ENCODE measurements at regions of chr11 and their contacts with region 1.

Region 1: GRCh38 chr11:46845740-46846509 is at the start of gene CKAP5:
- DNase-seq: peak; percentile 53 to 90
- H3K4me3 ChIP-seq: peak within 1 kb of the TSS; percentile 90 to 98 (median 92)
- H3K27ac ChIP-seq: peak within 1 kb of the TSS; percentile 75
- H3K4me1 ChIP-seq: peaks cover 0 to 2% (median 0%) of the 10 kb centered on the region in 4 experiments; a peak in 2 of 7 replicates
- H3K27me3 ChIP-seq: no peaks in the 10 kb centered on the region; a peak in 1 of 7 replicates
- CTCF ChIP-seq: no peak
- EP300 ChIP-seq: no peak
- POLR2A ChIP-seq: peak; percentile 19 to 73
- RAD21 ChIP-seq: no peak
- total RNA-seq, gene CKAP5: 185 and 192 TPM in 2 replicates

Region 2: DNA sequence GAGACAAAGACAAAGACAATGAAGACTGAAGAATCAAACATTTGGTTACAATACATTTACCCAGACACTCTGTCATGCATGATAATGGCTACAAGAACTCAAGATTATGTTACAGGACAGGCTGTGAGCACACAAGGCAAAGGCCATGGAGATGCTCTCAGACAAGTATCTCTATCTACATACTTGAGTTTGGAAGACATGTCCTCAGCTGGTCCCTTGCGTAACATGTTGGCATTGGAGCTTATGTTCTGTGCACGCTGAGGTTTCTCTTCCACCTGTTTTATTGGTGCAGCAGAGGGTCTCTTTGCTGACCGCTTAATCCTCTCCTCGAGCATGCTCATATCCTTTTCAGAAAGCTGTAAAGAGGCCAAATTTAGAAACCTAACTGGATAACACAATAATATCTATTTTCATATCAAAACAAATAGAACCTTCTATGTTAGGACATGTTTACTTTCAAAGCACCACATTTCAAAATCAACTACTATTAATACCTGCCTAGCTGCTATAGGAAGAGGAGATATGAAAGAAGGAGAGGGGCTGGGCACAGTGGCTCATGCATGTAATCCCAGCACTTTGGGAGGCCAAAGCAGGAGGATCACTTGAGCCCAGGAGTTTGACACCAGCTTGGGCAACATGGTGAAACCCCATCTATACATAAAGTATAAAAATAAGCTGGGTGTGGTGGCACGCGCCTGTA is 85.3 kb before region 1 on chr11:
- CTCF ChIA-PET with region 1: no interaction called
- POLR2A ChIA-PET with region 1: no interaction called
- DNase-seq: no peak
- H3K4me3 ChIP-seq: no peak overlapping the region
- H3K27ac ChIP-seq: no peak overlapping the region
- H3K4me1 ChIP-seq: no peaks in the 10 kb centered on the region
- H3K27me3 ChIP-seq: no peaks in the 10 kb centered on the region; a peak in 1 of 7 replicates
- CTCF ChIP-seq: no peak
- EP300 ChIP-seq: no peak
- POLR2A ChIP-seq: no peak
- RAD21 ChIP-seq: no peak

Region 3: DNA sequence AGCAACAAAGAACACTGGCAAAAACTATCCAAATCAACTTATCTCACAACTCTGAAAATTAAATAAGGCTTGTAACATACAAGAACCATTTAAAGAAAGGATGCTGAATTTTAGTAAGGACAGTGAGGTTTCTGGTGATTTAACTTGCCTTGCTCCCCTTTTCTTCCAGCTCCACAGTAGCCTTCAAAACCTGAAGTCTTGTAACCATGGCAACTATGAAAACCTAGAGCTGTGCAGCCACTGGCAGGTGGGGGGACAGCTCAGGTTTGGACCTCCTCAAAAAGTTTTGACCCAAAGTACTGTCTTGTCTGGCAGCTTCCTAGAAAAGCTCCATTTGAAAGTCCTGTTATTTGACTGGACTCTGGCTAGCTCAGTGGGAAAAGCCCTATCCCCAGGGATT is 59.8 kb before region 1 on chr11:
- CTCF ChIA-PET with region 1: no interaction called
- POLR2A ChIA-PET with region 1: no interaction called
- DNase-seq: no peak
- H3K4me3 ChIP-seq: no peak overlapping the region
- H3K27ac ChIP-seq: no peak overlapping the region
- H3K4me1 ChIP-seq: no peaks in the 10 kb centered on the region
- H3K27me3 ChIP-seq: no peaks in the 10 kb centered on the region
- CTCF ChIP-seq: no peak
- EP300 ChIP-seq: no peak
- POLR2A ChIP-seq: no peak
- RAD21 ChIP-seq: no peak

Region 4: DNA sequence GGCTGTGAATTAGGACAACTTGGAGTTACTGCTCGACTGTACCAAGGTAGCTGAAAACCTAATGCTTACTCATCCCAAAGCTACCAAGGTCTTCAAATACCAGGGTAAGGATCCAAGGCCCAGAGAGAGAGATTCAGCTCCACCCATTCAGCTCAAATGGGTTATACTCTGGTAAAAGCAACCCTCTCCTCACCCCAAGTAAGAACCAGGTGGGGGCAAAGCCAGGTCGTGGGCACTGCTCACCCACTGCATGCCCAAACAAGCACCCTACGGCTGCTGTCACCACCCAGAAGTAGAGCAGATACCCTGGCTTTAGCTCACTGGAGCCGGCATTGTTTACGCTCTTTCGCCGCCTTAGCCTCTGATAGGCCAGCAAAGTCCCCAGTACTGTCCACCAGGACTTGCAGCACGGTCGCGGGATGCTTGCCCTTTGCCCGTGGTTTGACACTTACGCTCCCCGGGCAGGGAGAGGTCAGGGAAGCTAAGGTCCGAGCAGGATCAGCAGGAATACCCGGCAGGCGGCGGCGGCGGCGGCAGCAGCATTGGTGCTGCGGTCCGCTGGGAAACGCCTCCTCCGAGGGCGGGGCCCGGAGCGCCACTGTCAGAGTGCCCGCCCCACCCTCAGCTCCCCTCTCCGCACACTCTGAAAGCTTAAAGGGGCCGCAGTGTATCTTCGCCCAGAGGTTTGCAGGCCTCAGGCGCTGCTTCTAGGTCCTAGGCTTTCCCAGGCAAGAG is 19.4 kb before region 1 on chr11:
- CTCF ChIA-PET with region 1: interaction called, 3 read pairs
- POLR2A ChIA-PET with region 1: interaction called, 16 read pairs
- DNase-seq: peak in 1 of 2 experiments; percentile 86
- H3K4me3 ChIP-seq: peak overlapping the region; percentile 33 to 61 (median 54); a peak in 7 of 8 replicates
- H3K27ac ChIP-seq: no peak overlapping the region
- H3K4me1 ChIP-seq: peaks cover 3 to 9% (median 5%) of the 10 kb centered on the region in 4 experiments; a peak in 6 of 7 replicates
- H3K27me3 ChIP-seq: no peaks in the 10 kb centered on the region
- CTCF ChIP-seq: no peak
- EP300 ChIP-seq: no peak
- POLR2A ChIP-seq: no peak
- RAD21 ChIP-seq: no peak

Region 5: GRCh38 chr11:46930089-46930488 is 84.2 kb after region 1 on chr11:
- CTCF ChIA-PET with region 1: no interaction called
- POLR2A ChIA-PET with region 1: no interaction called
- DNase-seq: no peak
- H3K4me3 ChIP-seq: no peak overlapping the region
- H3K27ac ChIP-seq: no peak overlapping the region
- H3K4me1 ChIP-seq: no peaks in the 10 kb centered on the region
- H3K27me3 ChIP-seq: no peaks in the 10 kb centered on the region
- CTCF ChIP-seq: no peak
- EP300 ChIP-seq: no peak
- POLR2A ChIP-seq: no peak
- RAD21 ChIP-seq: no peak